ENCODE measurements at regions of chr4 and their contacts with region 1.

Region 1: DNA sequence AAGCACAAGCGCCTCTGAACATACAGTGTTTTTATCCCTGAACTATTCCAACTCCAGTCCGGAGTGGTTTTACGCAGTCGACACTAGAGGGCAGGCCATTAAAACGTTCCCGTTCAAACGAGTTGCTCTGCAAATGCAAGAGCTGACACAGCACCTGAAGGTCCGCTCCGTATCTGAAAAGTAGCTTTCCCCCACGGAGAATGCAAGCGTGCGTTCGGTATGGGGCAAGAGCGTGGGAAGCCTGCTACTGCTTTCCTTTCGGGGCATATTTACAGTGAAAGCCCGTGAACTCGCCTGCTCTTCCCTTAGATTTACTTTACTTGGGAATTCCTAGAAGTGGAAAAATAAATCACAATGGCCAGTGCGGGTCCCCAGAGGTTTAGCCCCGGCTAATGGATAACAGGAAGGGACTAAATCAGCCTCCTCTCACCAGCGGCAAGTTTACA is 190.8 kb downstream of the TSPAN5 start:
- DNase-seq: peak; percentile 80
- ATAC-seq: peak; percentile 92
- H3K4me3 ChIP-seq: peak overlapping the region; percentile 36 to 51
- H3K27ac ChIP-seq: no peak overlapping the region
- H3K4me1 ChIP-seq: peaks cover 0 to 18% of the 10 kb centered on the region in 2 experiments; a peak in 2 of 4 replicates
- H3K27me3 ChIP-seq: no peaks in the 10 kb centered on the region
- CTCF ChIP-seq: peak; percentile 69 to 80 (median 74); a peak in 5 of 6 replicates
- POLR2A ChIP-seq: no peak
- RAD21 ChIP-seq: peak; percentile 96

Region 2: DNA sequence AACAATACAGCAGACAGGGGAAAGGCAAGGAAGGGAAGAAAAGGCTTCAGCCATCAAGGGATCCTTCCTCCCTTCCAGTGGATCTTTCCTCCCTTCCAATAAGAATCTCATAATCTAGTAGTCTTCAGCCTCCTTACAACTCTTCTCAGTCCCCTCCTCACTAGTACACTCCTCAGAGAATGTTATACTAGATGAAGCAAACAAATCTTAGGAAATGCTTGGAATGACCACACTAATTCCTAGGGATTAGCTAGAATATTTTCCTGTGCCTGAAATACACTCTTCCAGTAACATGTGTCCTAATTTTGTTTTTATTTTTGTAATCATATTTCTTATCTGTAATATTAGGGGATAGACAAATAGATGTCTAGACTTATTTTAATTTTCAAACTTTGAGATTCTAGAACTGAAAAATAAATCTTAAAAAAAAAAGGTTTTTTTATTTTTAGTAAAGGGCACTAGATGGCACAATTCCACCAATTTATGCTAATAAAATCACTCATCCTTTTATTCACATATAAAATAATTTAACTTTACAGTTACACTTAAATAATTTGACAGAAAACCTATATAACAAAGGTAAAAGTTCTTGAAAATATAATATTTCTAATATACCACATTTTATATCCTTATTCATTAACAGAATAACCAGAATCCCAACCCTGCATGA is 317.4 kb before region 1 on chr4:
- CTCF ChIA-PET with region 1: no interaction called
- POLR2A ChIA-PET with region 1: no interaction called
- RAD21 ChIA-PET with region 1: no interaction called
- intact Hi-C with region 1: loop called (anchors 5 kb)
- DNase-seq: no peak
- ATAC-seq: no peak
- H3K4me3 ChIP-seq: no peak overlapping the region
- H3K27ac ChIP-seq: no peak overlapping the region
- H3K4me1 ChIP-seq: no peaks in the 10 kb centered on the region
- H3K27me3 ChIP-seq: no peaks in the 10 kb centered on the region
- CTCF ChIP-seq: peak in 2 of 3 experiments; percentile 36 to 46; a peak in 2 of 6 replicates
- POLR2A ChIP-seq: no peak
- RAD21 ChIP-seq: peak; percentile 64

Region 3: DNA sequence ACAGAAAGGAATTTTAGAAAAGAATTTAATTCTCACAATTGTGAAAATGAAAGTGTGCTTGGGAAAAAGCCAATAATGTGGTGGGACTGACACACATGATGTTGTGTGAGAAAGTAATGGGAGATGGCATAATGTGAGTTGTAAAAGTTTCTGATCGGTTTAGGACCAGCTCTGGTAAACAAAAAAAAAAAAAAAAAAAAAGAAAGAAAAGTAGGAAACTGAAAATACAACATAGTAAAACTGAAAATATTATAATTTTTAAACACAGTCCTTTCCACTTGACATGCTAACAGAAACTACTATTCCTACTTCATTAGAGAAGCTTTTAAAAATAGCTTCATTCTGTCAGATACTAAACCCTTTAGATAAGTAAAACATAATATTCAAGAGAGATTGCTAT is 178.3 kb before region 1 on chr4:
- CTCF ChIA-PET with region 1: no interaction called
- POLR2A ChIA-PET with region 1: no interaction called
- RAD21 ChIA-PET with region 1: no interaction called
- intact Hi-C with region 1: no loop called
- DNase-seq: no peak
- ATAC-seq: no peak
- H3K4me3 ChIP-seq: no peak overlapping the region
- H3K27ac ChIP-seq: no peak overlapping the region
- H3K4me1 ChIP-seq: peaks cover 7 to 14% of the 10 kb centered on the region in 2 experiments; a peak in 3 of 4 replicates
- H3K27me3 ChIP-seq: no peaks in the 10 kb centered on the region
- CTCF ChIP-seq: no peak
- POLR2A ChIP-seq: no peak
- RAD21 ChIP-seq: no peak

Region 4: GRCh38 chr4:98642991-98643426 is 175.4 kb after region 1 on chr4:
- CTCF ChIA-PET with region 1: no interaction called
- POLR2A ChIA-PET with region 1: no interaction called
- RAD21 ChIA-PET with region 1: no interaction called
- intact Hi-C with region 1: no loop called
- DNase-seq: peak; percentile 68
- ATAC-seq: peak; percentile 92
- H3K4me3 ChIP-seq: no peak overlapping the region; a peak in 2 of 4 replicates
- H3K27ac ChIP-seq: peak overlapping the region; percentile 0; the same call in 1 of the 2 replicates
- H3K4me1 ChIP-seq: peaks cover 15 to 74% of the 10 kb centered on the region in 2 experiments
- H3K27me3 ChIP-seq: no peaks in the 10 kb centered on the region
- CTCF ChIP-seq: no peak
- POLR2A ChIP-seq: no peak
- RAD21 ChIP-seq: peak; percentile 29

Region 5: DNA sequence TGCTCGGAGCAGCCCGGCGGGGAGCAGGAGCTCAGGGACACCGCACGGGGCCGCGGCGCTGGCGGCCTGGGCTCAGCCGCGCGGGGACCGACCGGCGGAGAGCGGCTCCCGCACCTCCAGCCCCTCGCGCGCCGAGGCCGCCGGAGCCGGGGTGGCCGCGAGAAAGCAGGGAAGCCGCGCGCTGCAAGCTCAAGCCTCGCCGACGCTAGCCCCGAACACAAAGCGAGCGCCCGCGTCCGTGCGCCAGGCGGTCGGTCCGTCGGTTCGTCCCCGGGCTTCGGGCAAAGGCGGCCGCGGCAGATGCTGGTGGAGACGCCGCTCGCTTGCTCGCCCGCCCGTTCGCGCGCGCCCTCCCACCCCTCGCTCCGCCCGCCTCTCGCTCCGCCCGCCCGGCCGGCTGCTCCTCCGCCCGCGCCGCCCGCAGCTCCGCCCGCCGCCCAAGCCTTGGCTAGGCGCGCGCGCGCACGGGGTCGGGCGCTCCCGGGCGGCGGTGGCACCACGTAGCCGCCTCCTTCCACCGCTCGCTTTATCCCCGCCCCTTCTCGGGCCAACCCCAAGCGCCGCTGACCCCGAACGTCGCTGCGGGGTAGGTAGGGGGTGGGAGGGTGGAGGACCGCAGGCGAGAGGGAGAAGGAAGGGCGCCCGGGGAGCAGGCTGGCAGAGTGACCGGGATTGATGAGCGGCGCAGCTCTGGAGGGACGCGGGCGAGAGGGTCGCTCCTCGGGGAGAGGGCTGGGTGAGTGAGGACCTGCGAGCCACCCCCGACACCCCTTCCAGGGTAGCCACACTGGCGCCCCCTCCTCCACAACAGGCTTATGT is 190.8 kb after region 1 on chr4 and contains the start of gene TSPAN5:
- CTCF ChIA-PET with region 1: interaction called, 4 read pairs
- POLR2A ChIA-PET with region 1: no interaction called
- RAD21 ChIA-PET with region 1: interaction called in 1 of 2 experiments, 3 read pairs
- intact Hi-C with region 1: loop called (anchors 5 kb)
- DNase-seq: peak; percentile 64
- ATAC-seq: peak; percentile 83
- H3K4me3 ChIP-seq: peak within 1 kb of the TSS; percentile 85 to 89
- H3K27ac ChIP-seq: peak within 1 kb of the TSS; percentile 78
- H3K4me1 ChIP-seq: peaks cover 63 to 83% of the 10 kb centered on the region in 2 experiments
- H3K27me3 ChIP-seq: no peaks in the 10 kb centered on the region
- CTCF ChIP-seq: no peak
- POLR2A ChIP-seq: no peak
- RAD21 ChIP-seq: no peak
- total RNA-seq, gene TSPAN5: 56.8 TPM

Region 6: DNA sequence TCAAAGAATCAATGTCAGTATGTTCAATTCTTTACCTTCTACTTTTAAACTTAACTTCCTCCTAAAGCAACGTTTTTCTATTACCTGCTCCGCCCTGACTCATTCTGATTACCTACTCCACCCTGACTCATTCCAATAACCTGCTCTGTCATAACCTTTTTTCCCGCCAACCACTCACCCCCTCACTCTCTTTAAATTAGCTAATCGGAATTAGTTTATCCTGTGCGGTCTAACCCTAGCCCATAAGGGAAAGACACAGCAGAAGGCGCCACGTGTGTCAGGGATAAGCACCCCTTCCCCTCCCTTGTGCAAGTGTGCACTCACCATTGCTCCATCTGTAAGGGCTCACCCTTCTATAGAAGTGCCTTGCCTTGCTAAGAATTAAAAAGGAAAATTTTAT is 396.9 kb after region 1 on chr4:
- CTCF ChIA-PET with region 1: no interaction called
- POLR2A ChIA-PET with region 1: no interaction called
- RAD21 ChIA-PET with region 1: no interaction called
- intact Hi-C with region 1: loop called (anchors 10 kb)
- DNase-seq: peak; percentile 12
- ATAC-seq: peak; percentile 69
- H3K4me3 ChIP-seq: peak overlapping the region in 1 of 2 experiments; percentile 32; a peak in 2 of 4 replicates
- H3K27ac ChIP-seq: no peak overlapping the region
- H3K4me1 ChIP-seq: peaks cover 7 to 14% of the 10 kb centered on the region in 2 experiments
- H3K27me3 ChIP-seq: no peaks in the 10 kb centered on the region
- CTCF ChIP-seq: no peak
- POLR2A ChIP-seq: no peak
- RAD21 ChIP-seq: no peak

Region 7: DNA sequence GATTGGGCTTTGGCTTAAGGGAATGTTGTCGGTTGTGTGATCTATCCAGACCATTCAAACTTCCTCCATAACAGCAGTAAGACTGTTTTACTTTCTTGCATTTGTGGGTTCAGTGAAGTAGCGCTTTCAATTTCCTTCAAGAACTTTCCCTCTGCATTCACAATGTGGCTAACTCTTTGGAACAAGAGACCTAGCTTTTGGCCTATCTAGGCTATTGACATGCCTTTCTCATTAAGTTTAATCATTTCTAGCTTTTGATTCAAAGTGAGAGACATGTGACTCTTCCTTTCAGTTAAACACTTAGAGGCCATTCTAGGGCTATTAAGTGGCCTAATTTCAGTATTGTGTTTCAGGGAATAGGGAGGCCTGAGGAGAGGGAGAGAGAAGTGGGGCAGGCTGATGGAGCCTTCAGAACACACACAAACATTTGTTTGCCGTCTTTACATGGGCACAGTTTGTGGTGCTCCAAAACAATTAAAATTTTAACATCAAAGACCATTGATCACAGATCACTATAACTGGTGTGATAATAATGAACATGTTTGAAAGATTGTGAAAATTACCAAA is 586.9 kb after region 1 on chr4:
- CTCF ChIA-PET with region 1: interaction called, 5 read pairs
- POLR2A ChIA-PET with region 1: no interaction called
- RAD21 ChIA-PET with region 1: interaction called in 1 of 2 experiments, 3 read pairs
- intact Hi-C with region 1: loop called (anchors 2 kb)
- DNase-seq: no peak
- ATAC-seq: no peak
- H3K4me3 ChIP-seq: no peak overlapping the region
- H3K27ac ChIP-seq: no peak overlapping the region
- H3K4me1 ChIP-seq: peaks cover 13 to 24% of the 10 kb centered on the region in 2 experiments
- H3K27me3 ChIP-seq: no peaks in the 10 kb centered on the region
- CTCF ChIP-seq: no peak
- POLR2A ChIP-seq: no peak
- RAD21 ChIP-seq: no peak

Measured in HCT116 (cell line).